HEK293T (cell line): ENCODE measurements at regions of chr6 and their contacts with region 1.

Region 1: GRCh38 chr6:73520688-73521350 is at the start of gene EEF1A1:
- DNase-seq: peak; percentile 93

Region 2: GRCh38 chr6:73537677-73538076 is 16.9 kb after region 1 on chr6:
- CTCF ChIA-PET with region 1: interaction called, 4 read pairs
- POLR2A ChIA-PET with region 1: interaction called, 17 read pairs
- DNase-seq: no peak

Region 3: GRCh38 chr6:73580247-73581149 is 59.7 kb after region 1 on chr6:
- CTCF ChIA-PET with region 1: interaction called, 3 read pairs
- POLR2A ChIA-PET with region 1: interaction called, 49 read pairs
- DNase-seq: peak; percentile 71

Region 4: DNA sequence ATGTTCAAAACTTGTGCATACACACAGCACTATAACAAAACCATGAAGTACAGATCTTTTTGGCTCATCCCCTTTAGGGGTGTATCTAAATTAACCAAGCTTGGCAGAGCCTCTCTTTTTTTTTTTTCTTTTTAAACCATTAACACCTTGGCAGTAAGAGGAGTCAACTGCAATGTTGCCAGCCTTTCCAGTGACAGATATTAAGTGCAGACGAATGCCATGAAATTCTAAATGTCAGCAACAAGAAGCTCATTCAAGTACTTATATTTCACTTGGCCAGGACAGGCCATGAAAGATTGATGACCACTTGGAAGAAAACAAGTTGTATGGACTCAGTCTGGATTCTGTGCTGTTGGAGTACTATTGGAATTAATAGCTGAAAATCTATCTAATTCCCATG is 83.2 kb after region 1 on chr6:
- CTCF ChIA-PET with region 1: interaction called, 3 read pairs
- POLR2A ChIA-PET with region 1: interaction called, 14 read pairs
- DNase-seq: no peak

Region 5: DNA sequence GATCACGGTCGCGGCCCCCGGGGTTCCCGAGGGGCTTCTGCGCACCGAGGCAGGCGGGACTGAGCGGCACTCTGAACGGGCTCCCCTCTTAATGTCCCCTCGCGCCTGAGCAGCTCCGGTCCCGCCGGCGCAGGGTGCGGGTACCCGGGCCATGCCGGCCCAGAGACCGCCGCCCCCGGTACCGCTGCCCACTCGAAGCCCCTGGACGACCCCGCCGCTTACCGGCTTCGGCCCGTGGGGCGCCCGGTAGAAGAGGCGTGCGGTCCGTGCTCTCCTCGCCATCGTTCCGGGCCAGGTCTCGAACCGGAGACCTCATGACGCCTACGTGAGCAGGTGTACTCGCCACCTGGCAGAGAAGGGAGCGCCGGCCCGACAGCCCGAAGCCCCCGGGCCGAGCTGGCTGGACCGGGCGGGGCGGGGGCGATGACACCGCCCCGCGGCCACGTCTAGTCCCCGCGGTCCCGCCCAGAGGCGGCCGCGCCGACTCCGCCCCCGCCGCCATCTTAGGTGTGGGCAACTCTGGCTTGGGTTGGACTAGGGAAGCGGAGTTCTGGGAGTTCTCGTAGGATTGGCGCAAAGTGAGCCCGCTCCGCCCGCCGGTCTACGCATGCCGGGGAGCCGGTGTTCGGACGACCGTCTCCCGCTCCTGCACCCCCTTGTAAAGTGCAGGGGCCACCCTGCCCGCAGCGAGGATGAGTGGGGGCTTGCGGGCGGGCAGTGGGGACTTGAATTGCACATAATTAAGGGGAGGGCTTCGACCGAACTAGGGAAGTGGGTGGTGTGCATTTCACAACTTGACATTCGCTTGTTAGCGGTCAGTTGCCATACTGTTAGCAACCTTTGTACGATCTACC is 133.0 kb after region 1 on chr6 and contains the start of gene SLC17A5:
- CTCF ChIA-PET with region 1: interaction called, 3 read pairs
- POLR2A ChIA-PET with region 1: interaction called, 51 read pairs
- DNase-seq: peak; percentile 91